ENCODE measurements at regions of chr5 and their contacts with region 1.

Region 1: DNA sequence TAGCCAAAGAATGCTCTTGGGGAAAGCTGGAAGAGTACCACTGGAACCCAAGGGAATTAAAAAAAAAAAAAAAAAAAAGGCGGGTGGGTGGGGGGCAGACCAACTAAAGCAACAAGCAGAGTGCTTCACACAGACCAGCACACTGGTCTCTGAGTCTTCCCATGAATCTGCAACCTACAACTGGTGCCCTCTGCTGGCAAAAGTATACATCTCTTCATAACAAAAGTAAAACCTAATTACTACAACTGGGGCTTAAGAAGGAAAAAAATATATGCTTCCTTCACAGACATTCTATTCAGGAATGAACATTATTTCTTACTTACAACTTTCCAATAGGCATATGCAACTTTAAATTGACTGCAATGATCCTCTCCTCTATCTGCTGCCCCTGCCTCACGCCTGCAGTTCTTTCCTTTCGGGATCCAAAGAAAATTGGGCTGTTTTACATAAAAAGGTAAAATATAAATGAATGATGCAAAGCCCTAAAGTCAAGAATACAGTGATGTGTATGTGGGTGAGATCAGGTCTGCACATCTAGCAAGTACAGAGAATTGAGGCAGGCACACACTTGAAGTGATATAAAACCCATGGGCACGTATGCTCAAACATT is 7.2 kb upstream of the KLHL3 start:
- DNase-seq: peak; percentile 68
- H3K4me3 ChIP-seq: no peak overlapping the region
- H3K27ac ChIP-seq: no peak overlapping the region
- H3K4me1 ChIP-seq: peaks cover 0 to 3% (median 0%) of the 10 kb centered on the region in 4 donors
- H3K27me3 ChIP-seq: no peaks in the 10 kb centered on the region
- CTCF ChIP-seq: peak in 3 of 4 experiments; percentile 19 to 60 (median 37)
- EP300 ChIP-seq: no peak
- POLR2A ChIP-seq: no peak

Region 2: DNA sequence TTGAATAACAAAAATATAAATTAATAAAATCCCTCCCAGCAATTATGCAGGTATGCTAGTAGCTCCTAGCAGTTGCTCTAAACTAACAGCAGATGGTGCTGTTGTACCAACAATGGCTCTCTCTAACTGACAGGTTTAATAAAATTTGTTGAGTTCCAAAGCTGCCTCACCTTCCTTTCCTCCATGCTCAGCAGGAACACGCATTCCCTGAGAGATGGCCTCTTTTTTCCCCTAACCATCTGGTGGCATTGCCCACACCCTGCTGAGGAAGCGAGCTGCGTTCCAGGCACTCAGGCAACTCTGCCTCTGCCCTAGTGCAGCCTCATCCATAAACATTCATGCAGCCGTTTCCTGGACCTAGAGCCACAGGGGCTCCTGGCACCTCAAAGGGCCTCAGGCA is 113.5 kb before region 1 on chr5:
- intact Hi-C with region 1: loop called (anchors 1 kb)
- DNase-seq: no peak
- H3K4me3 ChIP-seq: no peak overlapping the region
- H3K27ac ChIP-seq: no peak overlapping the region
- H3K4me1 ChIP-seq: peaks cover 0 to 4% (median 0%) of the 10 kb centered on the region in 4 donors
- H3K27me3 ChIP-seq: no peaks in the 10 kb centered on the region
- CTCF ChIP-seq: peak; percentile 48 to 91 (median 74)
- EP300 ChIP-seq: no peak
- POLR2A ChIP-seq: no peak

Region 3: DNA sequence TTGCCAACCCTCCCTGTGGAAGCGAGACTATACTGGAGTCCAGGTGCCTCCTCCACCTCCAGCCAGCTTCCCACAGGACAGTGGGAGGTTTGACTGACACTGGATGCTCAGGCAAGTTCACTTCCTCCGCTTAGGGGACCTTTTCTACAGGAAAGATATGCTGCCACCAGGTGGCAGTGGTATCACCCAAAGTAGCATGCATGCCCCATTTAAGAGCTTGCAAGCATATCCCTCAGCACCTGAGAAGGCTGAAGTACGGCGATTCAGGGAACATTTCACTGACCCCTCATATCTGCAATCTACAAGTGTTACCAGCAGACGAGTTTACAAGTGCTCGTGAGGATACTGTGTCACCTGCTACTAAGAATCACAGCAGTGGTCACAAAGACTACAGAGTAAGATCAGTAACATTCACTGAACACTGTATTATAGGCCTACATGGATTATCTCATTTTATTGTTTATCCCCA is 82.8 kb before region 1 on chr5:
- intact Hi-C with region 1: loop called (anchors 2 kb)
- DNase-seq: peak; percentile 67
- H3K4me3 ChIP-seq: no peak overlapping the region
- H3K27ac ChIP-seq: no peak overlapping the region
- H3K4me1 ChIP-seq: no peaks in the 10 kb centered on the region
- H3K27me3 ChIP-seq: no peaks in the 10 kb centered on the region
- CTCF ChIP-seq: peak in 3 of 4 experiments; percentile 49 to 69 (median 54)
- EP300 ChIP-seq: no peak
- POLR2A ChIP-seq: no peak

Region 4: GRCh38 chr5:137997726-137998213 is 254.6 kb after region 1 on chr5:
- intact Hi-C with region 1: no loop called
- DNase-seq: no peak
- H3K4me3 ChIP-seq: no peak overlapping the region
- H3K27ac ChIP-seq: no peak overlapping the region
- H3K4me1 ChIP-seq: peaks cover 0 to 57% (median 49%) of the 10 kb centered on the region in 4 donors
- H3K27me3 ChIP-seq: no peaks in the 10 kb centered on the region
- CTCF ChIP-seq: no peak
- EP300 ChIP-seq: no peak
- POLR2A ChIP-seq: no peak